Dorsolateral prefrontal cortex (tissue), 120 donors: ENCODE measurements at regions of chr14 and their contacts with region 1.

Region 1: GRCh38 chr14:50785457-50786063 is 45.4 kb downstream of the NIN start:
- DNase-seq: no peak
- H3K4me3 ChIP-seq: peak overlapping the region in 11 of 59 donors; percentile 2 to 37 (median 9)
- H3K27ac ChIP-seq: peak overlapping the region in 50 of 59 donors; percentile 3 to 81 (median 52)
- H3K27me3 ChIP-seq: no peaks in the 10 kb centered on the region
- CTCF ChIP-seq: no peak

Region 2: GRCh38 chr14:50462111-50462510 is 323.4 kb before region 1 on chr14:
- intact Hi-C with region 1: no loop called
- DNase-seq: no peak
- H3K4me3 ChIP-seq: no peak overlapping the region
- H3K27ac ChIP-seq: peak overlapping the region in 5 of 59 donors; percentile 3 to 38 (median 14)
- H3K27me3 ChIP-seq: no peaks in the 10 kb centered on the region
- CTCF ChIP-seq: no peak

Region 3: DNA sequence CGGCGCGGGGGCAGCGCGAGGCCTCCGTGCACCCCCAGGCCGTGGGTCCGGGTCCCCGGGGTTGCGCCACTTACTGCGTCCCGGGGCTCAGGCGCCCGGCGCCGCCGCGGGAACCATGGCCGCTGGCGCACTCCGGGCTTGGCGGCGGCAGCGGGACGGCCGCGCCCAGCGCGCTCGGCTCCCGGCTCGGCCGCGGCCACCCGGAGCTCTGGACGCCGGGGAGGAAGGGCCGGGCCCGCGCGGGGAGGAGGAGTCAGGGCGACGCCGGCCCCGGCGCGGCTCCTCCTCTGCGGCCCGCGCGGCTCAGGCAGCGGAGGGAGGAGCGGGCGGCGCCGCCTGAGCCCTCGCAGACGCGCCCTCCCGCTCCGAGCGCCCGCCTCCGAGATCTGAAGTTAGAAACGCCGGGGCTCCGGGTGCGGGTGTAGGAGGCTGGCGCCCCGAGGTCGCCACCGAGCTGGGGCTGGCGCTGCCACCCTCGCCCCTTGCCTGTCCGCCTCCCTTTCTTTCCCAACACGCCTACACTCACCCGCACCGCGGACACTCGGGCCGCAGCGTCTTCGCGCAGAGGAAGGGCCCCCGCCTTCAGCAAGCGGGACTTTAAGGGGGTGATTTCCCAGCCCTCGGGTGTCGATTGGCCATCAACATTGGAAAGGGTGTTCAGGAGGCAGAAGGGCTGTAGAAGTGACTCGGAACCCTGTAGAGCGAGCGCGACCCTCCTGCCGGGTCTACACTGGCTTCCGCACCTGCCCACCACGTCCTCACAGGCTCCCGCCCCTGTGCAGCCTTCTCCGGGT is 45.6 kb after region 1 on chr14 and contains the start of gene NIN:
- intact Hi-C with region 1: loop called in 1 of 2 experiments (anchors 5 kb)
- DNase-seq: peak in 9 of 10 donors; percentile 48 to 85 (median 69)
- H3K4me3 ChIP-seq: peak within 1 kb of the TSS; percentile 60 to 95 (median 85)
- H3K27ac ChIP-seq: peak within 1 kb of the TSS; percentile 61 to 98 (median 92)
- H3K27me3 ChIP-seq: no peaks in the 10 kb centered on the region
- CTCF ChIP-seq: peak in 4 of 56 donors; percentile 16 to 23 (median 22)
- total RNA-seq, gene NIN: 64.4 to 125 (median 88.6) TPM